H1 (cell line): ENCODE measurements at regions of chr16 and their contacts with region 1.

Region 1: DNA sequence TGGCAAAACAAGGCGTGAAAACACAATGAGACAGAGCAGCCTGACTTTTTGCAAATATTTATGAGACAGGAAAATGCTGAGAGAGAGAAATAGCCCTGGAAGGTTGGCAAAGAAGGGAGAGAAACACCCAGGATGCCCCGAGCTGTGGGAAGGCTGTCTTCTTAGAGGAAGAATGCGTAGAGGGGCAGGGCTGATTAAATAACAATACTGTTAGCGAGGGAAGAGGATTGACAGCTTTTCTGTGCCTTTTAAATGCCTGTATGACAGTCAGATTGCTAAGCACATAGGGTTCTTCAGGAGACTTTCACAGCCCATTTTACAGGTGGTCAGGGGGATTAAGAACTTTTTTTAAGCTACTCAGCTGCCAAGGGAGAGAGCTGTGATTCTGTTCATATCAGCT is 219.2 kb downstream of the SHISA9 start:
- DNase-seq: no peak
- H3K4me3 ChIP-seq: 0 out of 8 replicates have a peak overlapping the region, but pooled peaks of 1 of the 4 experiments have one; percentile 12
- H3K27ac ChIP-seq: no peak overlapping the region
- H3K4me1 ChIP-seq: peaks cover 4 to 24% (median 16%) of the 10 kb centered on the region in 4 experiments; a peak in 6 of 7 replicates
- H3K27me3 ChIP-seq: no peaks in the 10 kb centered on the region
- CTCF ChIP-seq: no peak
- EP300 ChIP-seq: no peak
- POLR2A ChIP-seq: no peak
- RAD21 ChIP-seq: no peak

Region 2: GRCh38 chr16:13110124-13110796 is 10.3 kb before region 1 on chr16:
- CTCF ChIA-PET with region 1: interaction called, 4 read pairs
- POLR2A ChIA-PET with region 1: interaction called, 12 read pairs
- DNase-seq: peak in 1 of 2 experiments; percentile 43
- H3K4me3 ChIP-seq: no peak overlapping the region
- H3K27ac ChIP-seq: peak overlapping the region; percentile 20; the same call in 1 of the 2 replicates
- H3K4me1 ChIP-seq: peaks cover 0 to 7% (median 5%) of the 10 kb centered on the region in 4 experiments; a peak in 4 of 7 replicates
- H3K27me3 ChIP-seq: no peaks in the 10 kb centered on the region
- CTCF ChIP-seq: no peak
- EP300 ChIP-seq: no peak
- POLR2A ChIP-seq: no peak
- RAD21 ChIP-seq: peak in 1 of 2 experiments; percentile 2; a peak in 1 of 4 replicates